Posterior vena cava (tissue), 2 donors: ENCODE measurements at regions of chr4 and their contacts with region 1.

Region 1: DNA sequence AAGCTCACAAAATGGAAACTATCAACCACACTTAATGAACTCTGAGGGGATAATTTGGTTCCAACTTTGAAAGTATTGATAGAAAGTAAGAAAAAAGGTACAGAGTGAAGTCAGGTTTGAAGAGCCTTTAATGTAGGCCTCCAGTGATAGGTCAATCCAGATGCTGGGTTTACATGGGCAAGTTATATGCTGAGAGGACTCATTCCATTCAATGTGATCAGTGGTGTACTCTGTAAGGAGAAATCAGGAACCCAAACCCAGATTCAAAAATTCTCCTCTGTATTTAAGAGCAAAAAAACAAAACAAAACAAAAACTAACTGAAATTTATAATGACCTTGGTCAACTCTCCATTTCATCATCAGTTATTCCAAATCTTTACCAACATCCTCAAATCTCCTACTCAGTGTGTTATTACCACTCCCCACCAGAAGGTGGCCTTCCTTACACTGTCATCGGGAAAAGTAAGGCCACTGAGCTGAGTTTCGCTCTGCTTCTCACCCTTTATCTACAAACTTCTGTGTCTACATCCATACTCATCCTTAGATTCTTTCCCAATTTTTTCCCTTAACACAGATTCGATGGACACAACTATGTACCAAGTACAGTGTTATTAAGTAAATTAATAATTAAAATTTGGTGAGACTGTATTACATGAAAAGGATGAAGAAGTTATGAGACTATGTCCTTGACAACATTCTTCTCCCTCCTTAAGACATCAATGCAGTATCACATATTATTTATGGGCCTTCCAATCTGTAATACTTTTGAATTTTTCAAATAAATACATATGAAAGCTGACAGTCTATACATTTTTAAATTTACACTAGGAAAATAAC is 88.3 kb downstream of the ZAR1 start:
- DNase-seq: no peak

Region 2: DNA sequence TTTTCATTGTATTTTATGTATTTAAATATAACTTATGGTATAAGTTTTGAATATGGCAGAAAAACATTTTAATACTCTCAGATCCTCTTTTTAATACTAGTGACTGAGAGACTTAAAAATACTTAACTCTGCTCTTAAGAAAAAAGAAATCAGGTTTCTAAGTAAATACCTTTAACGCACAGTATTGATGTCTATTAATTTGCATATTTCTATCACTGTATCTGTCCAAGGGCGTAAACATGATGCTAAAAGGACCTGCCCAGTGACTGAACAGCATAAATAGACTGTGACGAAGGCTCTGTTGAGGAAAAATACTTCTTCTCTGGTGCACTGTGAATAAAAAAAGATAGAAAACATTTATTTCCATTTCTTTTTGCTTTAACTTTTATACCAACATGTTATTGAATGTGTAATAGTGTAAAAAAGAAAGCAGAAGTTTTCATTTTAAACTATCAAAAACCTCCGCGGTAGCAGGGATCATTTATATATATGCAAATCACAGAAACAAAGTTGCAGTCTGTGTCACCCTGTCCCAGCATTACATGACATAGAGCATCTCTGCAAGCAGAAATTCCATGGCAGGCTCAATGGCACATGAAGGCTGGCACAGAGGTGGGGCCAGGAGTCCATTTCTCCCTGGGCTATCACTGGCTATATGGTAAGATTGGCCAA is 12.9 kb before region 1 on chr4:
- intact Hi-C with region 1: no loop called
- DNase-seq: no peak

Region 3: DNA sequence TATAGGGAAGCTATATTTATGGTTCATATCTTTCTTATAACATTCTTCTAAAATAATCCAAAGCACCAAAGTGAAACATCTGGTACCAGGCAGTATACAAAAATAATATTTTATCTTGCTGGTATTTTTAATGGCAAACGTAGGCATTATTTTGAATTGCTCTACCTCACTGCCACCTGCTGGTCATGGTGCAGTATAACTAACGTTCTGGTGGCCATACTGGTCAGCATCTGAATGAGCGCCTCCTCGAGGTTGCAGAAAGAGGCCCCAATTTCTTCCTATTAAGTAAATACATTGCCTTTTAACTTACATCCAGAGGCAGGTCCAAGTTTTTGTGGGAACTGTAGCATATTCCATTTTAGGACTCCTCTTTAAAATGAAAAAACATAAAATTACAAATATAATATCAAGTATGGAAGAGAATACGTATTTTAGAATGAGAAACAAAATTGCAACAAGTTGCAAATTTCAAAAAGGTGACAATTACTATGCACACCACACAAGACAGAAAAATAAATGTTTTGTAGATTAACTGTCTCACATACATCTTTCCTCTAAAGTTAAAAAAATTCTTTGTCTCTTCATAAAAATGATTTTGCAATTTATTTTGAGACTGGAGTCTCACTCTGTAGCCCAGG is 384.8 kb after region 1 on chr4:
- intact Hi-C with region 1: loop called (anchors 5 kb)
- DNase-seq: no peak

Region 4: GRCh38 chr4:48968759-48969158 is 390.4 kb after region 1 on chr4:
- intact Hi-C with region 1: loop called (anchors 5 kb)
- DNase-seq: no peak